ENCODE measurements at regions of chr3 and their contacts with region 1.

Region 1: DNA sequence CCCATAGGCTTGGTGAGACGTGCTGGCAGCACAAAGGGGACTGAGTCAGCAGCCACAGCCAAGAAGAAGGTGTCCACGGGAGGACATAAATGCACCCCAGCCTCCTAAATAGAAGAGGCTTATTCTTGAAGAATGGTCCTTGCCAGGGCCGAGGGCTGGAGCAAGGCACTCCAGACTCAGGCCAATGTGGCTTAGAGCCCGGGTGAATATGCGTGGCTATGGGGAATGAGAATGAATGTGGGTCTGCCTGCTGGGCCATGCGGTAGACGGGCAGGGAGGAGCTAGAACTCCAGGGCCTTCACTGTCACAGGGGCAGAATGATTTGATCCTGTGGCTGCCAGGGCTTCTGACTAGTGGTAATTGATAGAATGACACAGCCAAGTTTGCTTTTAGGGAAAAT is 34.0 kb downstream of the DHX30 start:
- DNase-seq: no peak
- H3K4me3 ChIP-seq: no peak overlapping the region
- H3K27ac ChIP-seq: no peak overlapping the region
- H3K4me1 ChIP-seq: no peaks in the 10 kb centered on the region
- H3K27me3 ChIP-seq: no peaks in the 10 kb centered on the region
- CTCF ChIP-seq: no peak
- EP300 ChIP-seq: no peak
- RAD21 ChIP-seq: no peak

Region 2: DNA sequence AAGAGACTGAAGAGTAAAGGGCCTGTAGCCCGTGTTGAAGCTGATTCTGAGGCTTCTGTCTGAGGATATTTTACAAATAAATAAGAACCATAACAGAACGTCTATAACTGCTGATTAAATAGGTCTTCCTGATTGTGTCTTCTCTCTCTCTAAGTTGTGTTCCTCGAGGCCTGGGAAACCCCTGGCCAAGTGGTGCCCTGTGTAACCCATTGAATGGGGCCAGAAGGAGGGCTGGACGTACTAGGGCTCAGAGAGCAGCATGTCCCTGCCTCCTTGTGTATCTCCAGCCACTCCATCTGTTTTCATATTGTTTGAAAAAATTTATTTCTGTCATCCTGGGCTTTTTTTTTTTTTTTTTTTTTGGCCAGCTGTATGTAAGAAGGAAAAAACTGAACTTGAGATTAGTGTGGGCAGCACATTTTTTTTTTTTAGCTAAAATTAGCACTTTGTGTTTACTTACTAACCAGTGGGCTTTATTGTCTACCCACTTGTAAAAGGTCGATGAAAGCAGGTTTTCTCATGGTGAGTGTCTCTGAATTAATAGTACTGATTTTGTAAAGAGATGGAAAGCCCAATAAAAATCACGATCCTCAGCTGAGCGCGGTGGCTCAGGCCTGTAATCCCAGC is 23.3 kb before region 1 on chr3:
- CTCF ChIA-PET with region 1: interaction called, 11 read pairs
- POLR2A ChIA-PET with region 1: no interaction called
- DNase-seq: no peak
- H3K4me3 ChIP-seq: no peak overlapping the region
- H3K27ac ChIP-seq: no peak overlapping the region
- H3K4me1 ChIP-seq: no peaks in the 10 kb centered on the region
- H3K27me3 ChIP-seq: no peaks in the 10 kb centered on the region
- CTCF ChIP-seq: no peak
- EP300 ChIP-seq: no peak
- RAD21 ChIP-seq: no peak

Region 3: GRCh38 chr3:47849699-47850563 is 12.9 kb after region 1 on chr3:
- CTCF ChIA-PET with region 1: interaction called, 28 read pairs
- POLR2A ChIA-PET with region 1: interaction called, 3 read pairs
- DNase-seq: peak; percentile 61
- H3K4me3 ChIP-seq: no peak overlapping the region
- H3K27ac ChIP-seq: no peak overlapping the region; a peak in 1 of 4 replicates
- H3K4me1 ChIP-seq: no peaks in the 10 kb centered on the region
- H3K27me3 ChIP-seq: no peaks in the 10 kb centered on the region
- CTCF ChIP-seq: peak; percentile 62
- EP300 ChIP-seq: no peak
- RAD21 ChIP-seq: peak; percentile 30

Region 4: GRCh38 chr3:47996440-47996839 is 159.5 kb after region 1 on chr3:
- CTCF ChIA-PET with region 1: interaction called, 10 read pairs
- POLR2A ChIA-PET with region 1: no interaction called
- DNase-seq: no peak
- H3K4me3 ChIP-seq: no peak overlapping the region
- H3K27ac ChIP-seq: no peak overlapping the region
- H3K4me1 ChIP-seq: no peaks in the 10 kb centered on the region
- H3K27me3 ChIP-seq: no peaks in the 10 kb centered on the region
- CTCF ChIP-seq: no peak
- EP300 ChIP-seq: no peak
- RAD21 ChIP-seq: no peak

Region 5: GRCh38 chr3:48151058-48151806 is 314.2 kb after region 1 on chr3:
- CTCF ChIA-PET with region 1: interaction called, 85 read pairs
- POLR2A ChIA-PET with region 1: interaction called, 5 read pairs
- DNase-seq: peak; percentile 84
- H3K4me3 ChIP-seq: peak overlapping the region in 1 of 2 experiments; percentile 47; a peak in 1 of 4 replicates
- H3K27ac ChIP-seq: no peak overlapping the region
- H3K4me1 ChIP-seq: peaks cover 0 to 5% of the 10 kb centered on the region in 2 experiments; a peak in 2 of 4 replicates
- H3K27me3 ChIP-seq: no peaks in the 10 kb centered on the region
- CTCF ChIP-seq: peak; percentile 89
- EP300 ChIP-seq: no peak
- RAD21 ChIP-seq: peak; percentile 99

Measured in SK-N-SH (cell line).